ENCODE measurements at regions of chr16 and their contacts with region 1.

Region 1: DNA sequence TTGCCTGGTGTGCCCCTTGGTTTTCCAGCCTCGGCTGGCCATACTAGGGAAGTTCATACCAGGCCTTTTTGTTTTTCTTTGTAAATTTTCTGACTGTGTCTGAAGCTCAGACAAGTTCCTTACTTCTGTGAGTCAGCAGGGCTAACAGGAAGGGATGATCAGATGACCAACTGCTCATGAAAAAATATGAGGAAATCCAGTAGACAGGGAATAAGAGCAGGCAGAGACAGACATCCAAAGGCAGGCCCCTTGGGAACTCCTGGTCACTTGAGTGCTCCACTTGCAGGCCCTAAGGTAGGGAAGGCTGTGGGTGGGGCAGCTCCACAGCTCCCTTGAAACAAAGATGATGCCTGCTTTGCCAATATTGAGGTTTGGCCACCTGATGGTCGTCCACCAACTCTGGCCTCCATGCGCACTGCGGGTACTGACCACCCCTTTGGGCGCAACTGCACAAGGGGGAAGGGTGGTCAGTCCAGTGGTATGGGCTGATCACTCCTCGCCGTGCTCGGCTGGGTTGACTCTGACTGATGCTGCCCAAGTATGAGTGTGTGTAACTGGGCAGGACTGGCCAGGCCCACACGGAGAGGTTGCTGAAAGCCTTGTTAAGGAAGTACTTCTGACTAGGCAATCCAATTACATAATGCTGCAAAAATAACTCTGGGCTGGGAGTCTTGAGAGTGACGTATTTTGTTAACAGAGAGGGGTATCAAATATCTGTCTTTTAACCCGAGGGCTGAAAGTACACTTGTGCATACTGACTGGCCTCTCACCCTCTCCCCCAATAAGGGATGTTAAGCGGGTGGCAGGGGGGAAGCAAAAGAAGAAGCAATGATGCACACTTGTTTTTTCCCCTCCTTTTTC is 20.8 kb upstream of the ZFHX3 start:
- DNase-seq: peak; percentile 99
- ATAC-seq: peak; percentile 80
- H3K4me3 ChIP-seq: no peak overlapping the region
- H3K27ac ChIP-seq: peak overlapping the region; percentile 95
- H3K4me1 ChIP-seq: peaks cover 38% of the 10 kb centered on the region
- H3K27me3 ChIP-seq: no peaks in the 10 kb centered on the region
- CTCF ChIP-seq: no peak
- POLR2A ChIP-seq: peak; percentile 73
- RAD21 ChIP-seq: peak; percentile 23

Region 2: DNA sequence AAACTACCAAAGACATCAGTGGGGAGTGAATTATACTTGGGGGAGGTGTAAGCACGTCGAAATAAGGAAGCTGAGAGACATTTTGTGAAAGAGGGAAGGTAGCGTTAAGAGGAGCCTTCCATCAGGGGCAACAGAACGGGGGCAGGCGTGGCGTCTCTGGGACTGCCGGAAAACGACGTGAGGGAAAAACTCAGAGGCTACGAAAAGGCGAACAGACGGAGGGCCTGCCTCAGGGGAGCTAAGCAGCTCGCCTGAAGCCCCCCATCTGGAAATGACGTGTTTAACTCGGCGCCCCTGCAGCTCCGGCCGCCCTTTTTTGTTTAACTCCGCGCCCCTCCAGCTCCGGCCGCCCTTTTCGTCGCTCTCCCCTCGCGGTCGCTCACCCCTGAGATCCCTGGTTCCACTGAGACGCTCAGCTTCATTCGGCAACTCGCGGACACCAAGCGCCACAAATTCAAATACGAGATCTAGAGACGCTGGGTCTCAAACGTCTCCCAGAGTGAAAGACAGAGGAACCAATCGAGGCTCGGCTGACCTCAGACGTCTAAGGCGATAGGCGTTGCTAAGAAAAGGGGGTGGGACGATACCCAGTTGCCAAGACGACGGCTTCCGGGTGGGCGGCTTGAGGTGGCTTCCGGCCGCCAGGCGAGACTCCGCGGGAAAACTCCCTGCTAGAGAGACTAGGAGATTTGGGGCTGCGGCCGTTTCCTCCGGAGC is 404.1 kb before region 1 on chr16:
- CTCF ChIA-PET with region 1: no interaction called
- POLR2A ChIA-PET with region 1: no interaction called
- dilution Hi-C with region 1: no loop called
- in situ Hi-C with region 1: loop called (anchors 10 kb)
- intact Hi-C with region 1: no loop called
- DNase-seq: peak; percentile 99
- ATAC-seq: peak; percentile 100
- H3K4me3 ChIP-seq: peak overlapping the region; percentile 65
- H3K27ac ChIP-seq: peak overlapping the region; percentile 26; the same call in 1 of the 2 replicates
- H3K4me1 ChIP-seq: no peaks in the 10 kb centered on the region
- H3K27me3 ChIP-seq: no peaks in the 10 kb centered on the region
- CTCF ChIP-seq: no peak
- POLR2A ChIP-seq: peak; percentile 67; the same call in 1 of the 2 replicates
- RAD21 ChIP-seq: no peak

Region 3: DNA sequence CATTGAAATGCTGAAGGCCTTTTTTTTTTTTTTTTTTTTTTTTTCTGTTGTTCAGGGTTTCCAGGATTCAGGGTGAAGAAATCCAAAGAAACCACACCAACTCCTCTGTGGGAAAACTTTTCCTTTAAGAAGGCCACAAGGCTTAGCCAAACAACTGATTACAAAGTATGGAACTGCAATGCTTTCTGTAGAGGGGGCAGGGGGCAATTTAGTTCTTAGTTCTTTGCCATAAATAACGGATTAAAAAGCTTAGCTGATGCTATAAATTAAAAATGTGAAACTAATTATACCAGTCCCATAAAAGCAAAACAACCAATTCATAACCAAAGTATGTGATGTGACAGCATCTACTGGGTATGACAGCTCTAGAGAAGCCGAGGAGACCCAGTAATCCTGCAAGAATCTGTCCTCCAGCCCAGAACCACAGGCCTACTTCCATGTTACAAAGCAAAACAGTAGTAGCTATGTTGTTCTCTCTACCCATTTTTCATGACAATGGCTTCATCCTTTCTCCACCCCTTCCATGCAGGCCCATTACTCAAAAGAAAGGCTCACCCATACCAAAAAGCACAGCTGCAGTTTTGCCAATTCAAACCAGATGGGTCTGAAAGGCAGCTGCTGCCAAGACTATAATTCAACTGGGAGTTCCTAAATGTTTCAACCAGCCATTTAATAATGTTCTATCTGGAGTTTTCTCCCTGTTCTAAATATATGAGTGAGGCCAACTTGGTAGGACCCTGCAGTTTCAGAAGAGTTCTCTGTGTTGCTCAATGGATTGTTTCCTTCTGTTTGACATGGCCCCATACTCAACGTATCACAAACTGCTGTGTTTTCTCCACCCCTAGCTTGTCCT is 146.3 kb after region 1 on chr16:
- CTCF ChIA-PET with region 1: no interaction called
- POLR2A ChIA-PET with region 1: interaction called, 20 read pairs
- dilution Hi-C with region 1: no loop called
- in situ Hi-C with region 1: no loop called
- intact Hi-C with region 1: no loop called
- DNase-seq: peak; percentile 93
- ATAC-seq: peak; percentile 83
- H3K4me3 ChIP-seq: no peak overlapping the region
- H3K27ac ChIP-seq: peak overlapping the region; percentile 85; the same call in 1 of the 2 replicates
- H3K4me1 ChIP-seq: peaks cover 19% of the 10 kb centered on the region
- H3K27me3 ChIP-seq: no peaks in the 10 kb centered on the region
- CTCF ChIP-seq: no peak
- POLR2A ChIP-seq: no peak
- RAD21 ChIP-seq: no peak

Region 4: DNA sequence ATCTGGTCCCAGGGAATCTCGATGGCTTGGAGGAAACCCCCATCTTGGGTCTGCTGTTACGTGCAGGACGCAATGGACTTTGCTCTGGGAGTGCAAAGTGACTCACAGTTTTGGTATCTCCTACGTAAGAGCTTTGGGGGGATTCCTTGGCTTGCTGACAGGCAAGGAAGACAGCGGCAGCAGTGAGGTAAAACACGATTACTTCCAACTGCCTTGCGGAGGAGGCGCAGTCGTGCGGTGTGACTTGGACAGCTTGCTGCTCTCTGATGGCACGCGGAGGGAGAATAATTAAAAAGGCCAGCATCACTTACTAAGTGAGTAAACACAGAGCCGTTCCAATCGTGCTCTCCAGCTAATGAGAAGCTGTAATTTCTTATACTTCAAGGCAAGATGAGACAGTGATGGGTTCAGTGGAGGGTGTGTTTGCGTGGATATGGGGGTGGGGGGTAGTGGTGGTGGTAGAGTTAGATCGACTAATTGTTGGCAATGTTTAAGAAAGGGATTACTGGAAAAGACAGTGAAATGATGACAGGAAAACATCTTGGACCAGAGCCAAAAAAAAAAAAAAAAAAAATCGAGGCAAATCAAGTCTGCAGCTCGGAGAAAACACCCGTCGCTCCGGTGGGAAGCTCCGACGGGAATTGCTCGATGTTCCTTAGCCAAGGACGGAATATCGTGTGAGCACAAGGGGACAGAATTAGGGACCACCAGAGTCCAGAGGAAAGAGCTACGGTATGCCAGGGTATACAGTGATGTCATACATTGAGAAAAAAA is 164.0 kb after region 1 on chr16:
- CTCF ChIA-PET with region 1: no interaction called
- POLR2A ChIA-PET with region 1: no interaction called
- dilution Hi-C with region 1: no loop called
- in situ Hi-C with region 1: loop called (anchors 10 kb)
- intact Hi-C with region 1: no loop called
- DNase-seq: peak; percentile 100
- ATAC-seq: peak; percentile 62
- H3K4me3 ChIP-seq: peak overlapping the region; percentile 51
- H3K27ac ChIP-seq: peak overlapping the region; percentile 50
- H3K4me1 ChIP-seq: peaks cover 19% of the 10 kb centered on the region
- H3K27me3 ChIP-seq: no peaks in the 10 kb centered on the region
- CTCF ChIP-seq: peak; percentile 19; the same call in 1 of the 2 replicates
- POLR2A ChIP-seq: peak; percentile 86
- RAD21 ChIP-seq: 0 out of 2 replicates have a peak, but pooled peaks have one; percentile 11